CD8-positive, alpha-beta T cell (primary cell): ENCODE measurements at regions of chr1 and their contacts with region 1.

Region 1: DNA sequence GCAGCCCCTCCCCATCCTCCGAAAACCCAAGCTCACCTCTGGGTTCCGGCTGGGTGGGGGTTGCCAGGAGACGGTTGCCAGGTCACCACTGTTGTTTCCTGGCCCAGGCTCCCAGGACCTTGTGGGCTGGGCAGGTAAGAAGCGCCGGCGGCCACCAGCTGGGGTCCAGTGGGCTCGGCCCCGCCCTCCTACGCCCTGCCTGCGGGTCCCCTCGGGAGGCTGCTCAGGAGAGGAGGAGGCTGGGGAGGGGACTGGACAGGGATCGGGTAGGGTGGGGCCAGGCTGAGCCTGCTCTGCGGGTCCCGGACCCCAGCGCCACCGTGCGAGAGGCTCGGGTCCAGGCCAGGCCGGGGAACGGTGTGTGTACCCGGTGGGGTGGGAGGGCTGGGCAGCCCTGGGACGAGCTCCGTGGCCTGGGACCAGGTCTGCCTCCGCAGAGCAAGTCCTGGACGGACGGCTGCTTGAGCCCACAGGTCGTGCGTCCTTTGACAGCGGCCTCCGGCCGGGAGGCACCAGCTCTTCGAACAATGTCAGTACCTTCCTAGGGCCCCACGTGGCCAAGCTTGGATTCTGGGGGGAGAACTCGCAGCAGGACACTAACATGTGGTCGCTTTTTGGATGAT is at the start of gene TTLL10:
- DNase-seq: peak; percentile 28 to 81 (median 66)
- ATAC-seq: peak; percentile 45
- H3K4me3 ChIP-seq: no peak within 1 kb of the TSS
- H3K4me3 Mint-ChIP-seq: peak within 1 kb of the TSS; percentile 32
- H3K27ac ChIP-seq: no peak within 1 kb of the TSS
- H3K27ac Mint-ChIP-seq: no peak within 1 kb of the TSS
- H3K4me1 ChIP-seq: peaks cover 41% of the 10 kb centered on the region
- H3K4me1 Mint-ChIP-seq: peaks cover 32% of the 10 kb centered on the region
- H3K27me3 ChIP-seq: peaks cover 0 to 14% of the 10 kb centered on the region in 2 experiments
- H3K27me3 Mint-ChIP-seq: peaks cover 5% of the 10 kb centered on the region
- CTCF ChIP-seq: no peak
- total RNA-seq, gene TTLL10: not detected

Region 2: GRCh38 chr1:1109743-1110142 is 64.2 kb before region 1 on chr1:
- CTCF ChIA-PET with region 1: no interaction called
- POLR2A ChIA-PET with region 1: no interaction called
- intact Hi-C with region 1: no loop called
- DNase-seq: no peak
- ATAC-seq: no peak
- H3K4me3 ChIP-seq: no peak overlapping the region
- H3K4me3 Mint-ChIP-seq: no peak overlapping the region
- H3K27ac ChIP-seq: no peak overlapping the region
- H3K27ac Mint-ChIP-seq: no peak overlapping the region
- H3K4me1 ChIP-seq: peaks cover 6% of the 10 kb centered on the region
- H3K4me1 Mint-ChIP-seq: peaks cover 19% of the 10 kb centered on the region
- H3K27me3 ChIP-seq: no peaks in the 10 kb centered on the region
- H3K27me3 Mint-ChIP-seq: no peaks in the 10 kb centered on the region
- CTCF ChIP-seq: no peak

Region 3: DNA sequence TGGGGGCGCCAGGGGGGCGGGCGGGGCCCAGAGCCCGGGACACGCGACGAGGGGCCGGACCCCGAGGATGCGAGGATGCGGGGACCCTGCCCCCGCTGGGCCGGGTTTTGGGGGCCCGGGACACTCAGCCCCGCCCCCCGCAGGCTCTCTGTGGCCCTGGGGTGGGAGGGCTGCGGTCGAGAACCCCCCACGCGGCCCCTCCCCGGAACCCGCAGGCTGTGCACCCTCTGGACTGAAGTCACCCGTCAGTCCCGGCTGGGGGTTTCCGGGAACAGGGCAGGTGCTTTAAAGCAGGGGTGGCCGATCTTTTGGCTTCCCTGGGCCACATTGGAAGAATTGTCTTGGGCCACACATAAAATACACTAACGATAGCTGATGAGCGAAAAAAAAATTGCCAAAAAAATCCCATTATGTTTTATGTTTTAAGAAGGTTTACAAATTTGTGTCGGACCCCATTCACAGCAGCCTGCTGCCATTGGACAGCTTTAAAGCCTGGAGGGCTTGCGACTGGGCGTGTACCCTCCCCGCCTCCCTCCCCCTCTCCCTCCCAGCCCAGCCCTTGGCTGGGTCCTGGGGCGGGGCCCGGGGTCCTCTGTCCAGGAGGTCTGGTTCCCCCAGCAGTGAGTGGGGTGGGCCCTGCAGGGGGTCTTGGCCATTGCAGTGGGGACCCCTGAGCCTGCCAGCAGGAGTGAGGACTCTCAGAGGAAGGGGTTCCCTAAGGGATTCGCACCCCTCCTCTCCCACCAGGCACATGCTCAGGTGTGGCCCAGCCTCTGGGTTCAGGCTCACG is 36.5 kb before region 1 on chr1:
- CTCF ChIA-PET with region 1: no interaction called
- POLR2A ChIA-PET with region 1: interaction called, 3 read pairs
- intact Hi-C with region 1: loop called in 1 of 2 experiments (anchors 5 kb)
- DNase-seq: peak; percentile 36 to 89 (median 75)
- ATAC-seq: peak; percentile 83
- H3K4me3 ChIP-seq: peak overlapping the region in 1 of 2 experiments; percentile 3
- H3K4me3 Mint-ChIP-seq: peak overlapping the region; percentile 74
- H3K27ac ChIP-seq: no peak overlapping the region
- H3K27ac Mint-ChIP-seq: peak overlapping the region; percentile 80
- H3K4me1 ChIP-seq: peaks cover 26% of the 10 kb centered on the region
- H3K4me1 Mint-ChIP-seq: peaks cover 17% of the 10 kb centered on the region
- H3K27me3 ChIP-seq: peaks cover 0 to 3% of the 10 kb centered on the region in 2 experiments
- H3K27me3 Mint-ChIP-seq: no peaks in the 10 kb centered on the region
- CTCF ChIP-seq: no peak

Region 4: GRCh38 chr1:1206376-1207260 is 32.7 kb after region 1 on chr1 and contains the start of gene TNFRSF18:
- CTCF ChIA-PET with region 1: no interaction called
- POLR2A ChIA-PET with region 1: no interaction called
- intact Hi-C with region 1: loop called in 1 of 2 experiments (anchors 1 kb)
- DNase-seq: peak in 3 of 9 experiments; percentile 31 to 59 (median 58)
- ATAC-seq: no peak
- H3K4me3 ChIP-seq: peak within 1 kb of the TSS; percentile 27 to 33
- H3K4me3 Mint-ChIP-seq: peak within 1 kb of the TSS; percentile 58
- H3K27ac ChIP-seq: no peak within 1 kb of the TSS
- H3K27ac Mint-ChIP-seq: no peak within 1 kb of the TSS
- H3K4me1 ChIP-seq: peaks cover 33% of the 10 kb centered on the region
- H3K4me1 Mint-ChIP-seq: peaks cover 18% of the 10 kb centered on the region
- H3K27me3 ChIP-seq: peaks cover 0 to 15% of the 10 kb centered on the region in 2 experiments
- H3K27me3 Mint-ChIP-seq: peaks cover 4% of the 10 kb centered on the region
- CTCF ChIP-seq: no peak
- total RNA-seq, gene TNFRSF18: 4.2 to 4.6 TPM